PC-3 (cell line): ENCODE measurements at regions of chr1 and their contacts with region 1.

Region 1: DNA sequence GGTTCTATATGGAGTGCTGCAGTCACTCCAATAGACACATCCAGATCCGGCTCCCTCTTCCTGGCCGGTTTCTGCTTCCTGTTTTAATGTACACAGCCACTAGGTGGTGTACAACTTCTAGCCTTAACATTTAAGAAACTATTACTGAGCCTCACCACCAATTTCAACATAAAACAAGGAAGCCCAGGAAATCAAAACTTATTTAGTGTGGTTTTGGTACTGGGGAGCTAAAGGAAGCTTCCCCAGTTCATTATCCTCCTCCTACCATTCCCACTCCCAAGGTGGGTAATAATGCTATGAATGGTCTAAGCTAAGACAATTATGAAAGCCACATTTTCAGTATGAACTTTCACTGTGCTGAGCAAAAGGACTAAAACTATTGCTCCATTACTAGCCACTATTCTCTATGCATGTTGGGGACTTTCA is 25.5 kb upstream of the MTMR11 start:
- DNase-seq: peak; percentile 89
- ATAC-seq: peak; percentile 97
- H3K4me3 ChIP-seq: no peak overlapping the region
- H3K27ac ChIP-seq: no peak overlapping the region
- H3K4me1 ChIP-seq: no peaks in the 10 kb centered on the region
- H3K27me3 ChIP-seq: no peaks in the 10 kb centered on the region
- CTCF ChIP-seq: peak; percentile 93

Region 2: DNA sequence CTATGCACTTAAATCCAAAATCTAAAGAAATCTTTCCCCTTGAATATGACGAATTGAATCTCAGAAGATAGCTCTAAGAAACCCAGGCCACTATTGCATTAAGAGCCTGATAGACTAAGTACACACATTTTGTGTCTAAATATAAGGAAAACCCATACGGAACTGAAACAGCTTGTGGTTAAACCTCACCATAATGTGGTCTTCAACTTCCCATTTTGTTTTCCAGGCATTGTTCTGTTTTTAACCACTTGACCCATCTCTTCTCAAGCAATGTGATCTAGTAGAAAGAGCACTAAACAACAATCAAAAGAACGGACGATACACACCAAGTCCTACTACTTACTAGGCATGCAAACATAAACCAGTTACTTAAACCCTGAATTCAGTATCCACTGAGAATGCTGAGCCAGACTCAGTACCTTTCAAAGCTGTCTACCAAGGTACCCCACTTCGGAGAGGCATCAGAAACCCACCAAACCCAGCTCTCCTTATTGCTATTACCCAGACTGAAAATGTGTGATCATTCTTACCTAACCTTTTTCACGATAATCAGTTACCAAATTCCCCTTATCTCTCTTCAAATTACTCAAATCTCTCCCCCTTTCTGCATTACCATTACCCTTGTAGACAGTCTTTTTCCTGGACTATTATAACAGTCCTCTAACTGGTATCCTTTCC is 35.6 kb after region 1 on chr1:
- CTCF ChIA-PET with region 1: no interaction called
- POLR2A ChIA-PET with region 1: no interaction called
- intact Hi-C with region 1: loop called (anchors 2 kb)
- DNase-seq: no peak
- ATAC-seq: no peak
- H3K4me3 ChIP-seq: no peak overlapping the region
- H3K27ac ChIP-seq: no peak overlapping the region; the same call in 1 of the 2 replicates
- H3K4me1 ChIP-seq: peaks cover 35% of the 10 kb centered on the region
- H3K27me3 ChIP-seq: no peaks in the 10 kb centered on the region
- CTCF ChIP-seq: no peak

Region 3: GRCh38 chr1:150010393-150011115 is 48.4 kb after region 1 on chr1 and contains the start of gene OTUD7B:
- CTCF ChIA-PET with region 1: interaction called, 6 read pairs
- POLR2A ChIA-PET with region 1: no interaction called
- intact Hi-C with region 1: loop called (anchors 2 kb)
- DNase-seq: peak; percentile 94
- ATAC-seq: peak; percentile 66
- H3K4me3 ChIP-seq: peak within 1 kb of the TSS; percentile 99
- H3K27ac ChIP-seq: peak within 1 kb of the TSS; percentile 84
- H3K4me1 ChIP-seq: peaks cover 41% of the 10 kb centered on the region
- H3K27me3 ChIP-seq: no peaks in the 10 kb centered on the region
- CTCF ChIP-seq: no peak
- total RNA-seq, gene OTUD7B: 11.5 and 14.6 TPM in 2 replicates

Region 4: DNA sequence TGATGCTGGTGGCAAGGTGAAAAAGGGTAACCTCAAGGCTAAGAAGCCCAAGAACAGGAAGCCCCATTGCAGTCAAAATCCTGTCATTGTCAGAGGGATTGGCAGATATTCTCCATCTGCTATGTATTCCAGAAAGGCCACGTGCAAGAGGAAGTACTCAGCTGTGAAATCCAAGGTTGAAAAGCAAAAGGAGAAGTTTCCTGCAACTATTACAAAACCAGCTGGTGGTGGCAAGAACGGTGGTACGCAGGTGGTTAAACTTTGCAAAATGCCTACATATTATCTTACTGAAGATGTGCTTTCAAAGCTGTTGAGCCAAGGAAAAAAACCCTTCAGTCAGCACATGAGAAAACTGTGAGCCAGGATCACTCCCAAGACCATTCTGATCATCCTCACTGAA is 91.8 kb after region 1 on chr1:
- CTCF ChIA-PET with region 1: interaction called, 3 read pairs
- POLR2A ChIA-PET with region 1: no interaction called
- intact Hi-C with region 1: loop called (anchors 1 kb)
- DNase-seq: no peak
- ATAC-seq: no peak
- H3K4me3 ChIP-seq: no peak overlapping the region
- H3K27ac ChIP-seq: no peak overlapping the region
- H3K4me1 ChIP-seq: peaks cover 12% of the 10 kb centered on the region
- H3K27me3 ChIP-seq: no peaks in the 10 kb centered on the region
- CTCF ChIP-seq: no peak

Region 5: GRCh38 chr1:150067184-150068036 is 105.3 kb after region 1 on chr1 and contains the start of gene VPS45:
- CTCF ChIA-PET with region 1: no interaction called
- POLR2A ChIA-PET with region 1: no interaction called
- intact Hi-C with region 1: loop called (anchors 1 kb)
- DNase-seq: peak; percentile 94
- ATAC-seq: peak; percentile 95
- H3K4me3 ChIP-seq: peak within 1 kb of the TSS; percentile 87
- H3K27ac ChIP-seq: peak within 1 kb of the TSS; percentile 83
- H3K4me1 ChIP-seq: peaks cover 21% of the 10 kb centered on the region
- H3K27me3 ChIP-seq: no peaks in the 10 kb centered on the region
- CTCF ChIP-seq: peak; percentile 50; the same call in 1 of the 2 replicates
- total RNA-seq, gene VPS45: 39.5 and 47.8 TPM in 2 replicates

Region 6: GRCh38 chr1:150146849-150147542 is 184.9 kb after region 1 on chr1:
- CTCF ChIA-PET with region 1: no interaction called
- POLR2A ChIA-PET with region 1: no interaction called
- intact Hi-C with region 1: no loop called
- DNase-seq: no peak
- ATAC-seq: no peak
- H3K4me3 ChIP-seq: no peak overlapping the region
- H3K27ac ChIP-seq: no peak overlapping the region
- H3K4me1 ChIP-seq: peaks cover 9% of the 10 kb centered on the region; the same call in 1 of the 2 replicates
- H3K27me3 ChIP-seq: no peaks in the 10 kb centered on the region
- CTCF ChIP-seq: no peak

Region 7: GRCh38 chr1:150168960-150169601 is 206.9 kb after region 1 on chr1:
- CTCF ChIA-PET with region 1: no interaction called
- POLR2A ChIA-PET with region 1: no interaction called
- intact Hi-C with region 1: loop called (anchors 1 kb)
- DNase-seq: peak; percentile 78
- ATAC-seq: peak; percentile 83
- H3K4me3 ChIP-seq: no peak overlapping the region
- H3K27ac ChIP-seq: no peak overlapping the region
- H3K4me1 ChIP-seq: no peaks in the 10 kb centered on the region
- H3K27me3 ChIP-seq: no peaks in the 10 kb centered on the region
- CTCF ChIP-seq: peak; percentile 98

Region 8: GRCh38 chr1:150708595-150708994 is 746.5 kb after region 1 on chr1:
- CTCF ChIA-PET with region 1: no interaction called
- POLR2A ChIA-PET with region 1: no interaction called
- intact Hi-C with region 1: no loop called
- DNase-seq: no peak
- ATAC-seq: no peak
- H3K4me3 ChIP-seq: no peak overlapping the region
- H3K27ac ChIP-seq: no peak overlapping the region
- H3K4me1 ChIP-seq: no peaks in the 10 kb centered on the region
- H3K27me3 ChIP-seq: no peaks in the 10 kb centered on the region
- CTCF ChIP-seq: no peak